OCI-LY7 (cell line): ENCODE measurements at regions of chr7 and their contacts with region 1.

Region 1: GRCh38 chr7:4973728-4974198 is 14.8 kb upstream of the MMD2 start:
- DNase-seq: peak; percentile 96
- H3K4me3 ChIP-seq: peak overlapping the region; percentile 99
- H3K27ac ChIP-seq: peak overlapping the region; percentile 69
- H3K4me1 ChIP-seq: peaks cover 9% of the 10 kb centered on the region
- CTCF ChIP-seq: peak; percentile 90

Region 2: DNA sequence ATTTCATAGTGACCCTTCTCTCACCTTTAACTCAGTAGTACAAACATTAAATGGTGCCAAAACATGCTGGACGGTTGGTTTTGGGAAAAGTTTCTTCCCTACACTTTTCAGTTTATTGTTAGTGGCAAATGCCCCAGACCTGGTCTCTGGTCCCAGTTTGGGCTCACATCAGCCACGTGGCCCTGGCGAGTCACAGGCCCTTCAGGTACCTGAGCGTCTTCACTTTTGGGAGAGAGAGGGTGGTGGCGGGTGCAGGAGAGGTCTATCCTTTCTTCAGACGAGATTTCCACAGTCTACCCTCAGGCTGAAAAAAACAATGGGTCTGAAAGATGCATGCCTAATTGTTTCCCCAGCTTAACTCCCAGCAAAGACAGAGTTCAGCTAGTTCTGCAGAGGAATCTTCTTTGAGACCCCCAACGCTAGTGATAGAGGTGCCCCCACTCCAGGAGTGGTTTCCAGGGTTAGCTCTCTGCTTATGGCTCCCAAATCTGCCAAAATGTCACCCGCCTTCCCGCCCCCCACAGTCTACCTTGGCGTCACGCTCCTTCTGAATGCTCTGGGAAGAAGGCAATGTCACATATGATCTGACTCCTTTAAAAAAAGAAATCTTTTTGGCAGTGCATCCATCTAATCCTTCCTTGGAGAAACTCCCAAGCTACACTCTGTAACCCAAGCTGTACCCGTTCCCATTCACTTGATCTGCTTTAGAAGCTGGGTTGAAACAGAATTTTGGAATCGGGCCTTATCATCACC is 676.4 kb before region 1 on chr7:
- CTCF ChIA-PET with region 1: no interaction called
- POLR2A ChIA-PET with region 1: no interaction called
- intact Hi-C with region 1: no loop called
- DNase-seq: no peak
- H3K4me3 ChIP-seq: no peak overlapping the region
- H3K27ac ChIP-seq: no peak overlapping the region
- H3K4me1 ChIP-seq: no peaks in the 10 kb centered on the region
- CTCF ChIP-seq: no peak

Region 3: GRCh38 chr7:4775250-4775847 is 198.4 kb before region 1 on chr7 and contains the start of gene AP5Z1:
- CTCF ChIA-PET with region 1: no interaction called
- POLR2A ChIA-PET with region 1: no interaction called
- intact Hi-C with region 1: loop called (anchors 10 kb)
- DNase-seq: peak; percentile 97
- H3K4me3 ChIP-seq: peak within 1 kb of the TSS; percentile 100
- H3K27ac ChIP-seq: peak within 1 kb of the TSS; percentile 47
- H3K4me1 ChIP-seq: peaks cover 18% of the 10 kb centered on the region
- CTCF ChIP-seq: no peak
- total RNA-seq, gene AP5Z1: 35.0 and 37.0 TPM in 2 replicates

Region 4: GRCh38 chr7:4792537-4793126 is 181.1 kb before region 1 on chr7:
- CTCF ChIA-PET with region 1: interaction called, 11 read pairs
- POLR2A ChIA-PET with region 1: no interaction called
- intact Hi-C with region 1: no loop called
- DNase-seq: no peak
- H3K4me3 ChIP-seq: no peak overlapping the region
- H3K27ac ChIP-seq: no peak overlapping the region
- H3K4me1 ChIP-seq: no peaks in the 10 kb centered on the region
- CTCF ChIP-seq: no peak

Region 5: GRCh38 chr7:4883374-4884144 is 90.2 kb before region 1 on chr7 and contains the start of gene RADIL:
- CTCF ChIA-PET with region 1: no interaction called
- POLR2A ChIA-PET with region 1: no interaction called
- intact Hi-C with region 1: no loop called
- DNase-seq: peak; percentile 60
- H3K4me3 ChIP-seq: no peak within 1 kb of the TSS
- H3K27ac ChIP-seq: no peak within 1 kb of the TSS
- H3K4me1 ChIP-seq: no peaks in the 10 kb centered on the region
- CTCF ChIP-seq: peak; percentile 71
- total RNA-seq, gene RADIL: not detected in 2 replicates

Region 6: DNA sequence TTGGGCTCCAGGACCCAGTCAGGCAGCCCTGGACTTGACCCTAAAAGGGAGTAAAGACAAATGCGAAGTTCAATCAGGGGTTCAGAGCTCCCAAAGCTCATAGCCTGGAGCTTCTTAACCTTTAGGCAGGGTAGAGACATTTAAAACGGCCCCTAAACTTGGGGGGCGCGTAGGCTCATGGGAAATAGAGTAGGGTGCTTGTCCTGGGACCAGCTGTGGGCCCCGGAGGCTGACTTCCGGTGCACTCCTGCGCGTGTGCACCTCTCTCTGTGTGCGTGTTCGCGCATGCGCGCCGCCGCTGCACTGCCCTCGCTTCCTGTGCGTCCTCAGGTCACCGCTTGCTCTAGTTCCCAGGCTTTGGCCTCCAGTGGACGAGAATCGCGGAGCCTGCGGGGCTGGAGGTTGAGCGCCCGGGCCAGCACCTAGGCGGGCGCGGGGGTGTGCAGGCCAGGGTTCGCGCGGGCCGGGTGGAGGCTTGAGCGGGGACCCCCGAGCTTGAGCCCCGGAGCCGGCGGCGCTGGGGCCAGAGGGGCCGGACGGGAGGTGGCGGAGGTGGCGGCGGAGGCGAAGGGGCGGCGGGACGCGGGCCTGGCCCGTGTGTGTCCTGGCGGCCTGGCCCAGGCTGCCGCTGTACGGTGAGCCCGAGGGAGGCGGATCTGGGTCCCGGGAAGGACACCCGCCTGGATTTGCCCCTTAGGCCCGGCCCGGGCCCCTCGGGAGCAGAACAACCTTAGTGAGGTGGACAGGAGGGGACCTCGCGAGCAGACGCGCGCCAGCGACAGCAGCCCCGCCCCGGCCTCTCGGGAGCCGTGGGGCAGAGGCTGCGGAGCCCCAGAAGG is 72.0 kb after region 1 on chr7 and contains the start of gene RBAK:
- CTCF ChIA-PET with region 1: interaction called, 3 read pairs
- POLR2A ChIA-PET with region 1: interaction called, 6 read pairs
- intact Hi-C with region 1: loop called (anchors 1 kb)
- DNase-seq: peak; percentile 98
- H3K4me3 ChIP-seq: peak within 1 kb of the TSS; percentile 86
- H3K27ac ChIP-seq: peak within 1 kb of the TSS; percentile 13
- H3K4me1 ChIP-seq: peaks cover 13% of the 10 kb centered on the region
- CTCF ChIP-seq: no peak
- total RNA-seq, gene RBAK: 7.4 and 9.5 TPM in 2 replicates

Region 7: GRCh38 chr7:5083311-5083711 is 109.5 kb after region 1 on chr7:
- CTCF ChIA-PET with region 1: interaction called, 4 read pairs
- POLR2A ChIA-PET with region 1: no interaction called
- intact Hi-C with region 1: loop called (anchors 1 kb)
- DNase-seq: no peak
- H3K4me3 ChIP-seq: no peak overlapping the region
- H3K27ac ChIP-seq: no peak overlapping the region
- H3K4me1 ChIP-seq: no peaks in the 10 kb centered on the region
- CTCF ChIP-seq: no peak

Region 8: DNA sequence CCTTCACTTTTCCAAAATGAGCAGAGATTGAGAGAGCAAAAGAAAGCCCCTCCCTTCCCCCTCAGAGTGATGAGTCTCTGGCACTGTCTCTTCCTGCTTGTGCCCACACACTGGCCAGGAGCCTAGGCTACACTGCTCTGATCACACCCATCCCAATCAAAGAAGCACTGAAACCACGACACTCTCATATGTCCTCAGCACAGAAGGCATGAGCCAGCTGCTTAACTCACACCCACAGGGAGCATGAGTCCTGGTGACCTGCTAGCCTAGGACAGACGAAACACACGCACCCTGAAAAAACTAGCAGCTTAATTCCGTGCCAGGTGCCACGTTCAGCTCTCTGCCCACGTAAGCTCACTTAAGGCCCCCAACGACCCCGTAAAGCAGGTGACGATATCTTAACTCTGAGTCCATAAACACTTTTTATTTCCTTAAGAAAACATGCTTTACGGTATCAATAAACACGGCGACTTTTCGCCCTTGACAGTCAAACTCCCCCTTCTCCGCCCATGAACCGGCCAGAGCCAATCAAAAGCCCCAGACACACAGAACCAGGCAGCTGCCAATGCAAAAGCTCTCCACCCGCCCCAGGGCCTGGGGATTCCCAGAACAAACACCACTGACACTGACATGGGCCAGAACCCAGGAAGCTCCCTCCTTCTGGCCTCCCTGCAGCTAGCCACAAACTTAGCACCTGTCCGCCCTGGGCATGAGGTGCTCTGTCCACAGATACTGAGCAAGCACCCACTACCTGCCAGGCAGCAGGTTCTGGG is 380.9 kb after region 1 on chr7:
- CTCF ChIA-PET with region 1: no interaction called
- POLR2A ChIA-PET with region 1: no interaction called
- intact Hi-C with region 1: no loop called
- DNase-seq: peak; percentile 25
- H3K4me3 ChIP-seq: no peak overlapping the region
- H3K27ac ChIP-seq: no peak overlapping the region
- H3K4me1 ChIP-seq: peaks cover 10% of the 10 kb centered on the region
- CTCF ChIP-seq: no peak